Activated T-helper 1 cell treated with anti-CD3 and anti-CD28 coated beads, Interleukin-12 subunit alpha, Interleukin-12 subunit beta, Interleukin-2, Interleukin-4 antibody, amounts not matched to agents 30 ng/mL and 10 ng/mL and 1 ng/mL, durations not matched to agents 14 hours and 24 hours and 36 hours (primary cell): ENCODE measurements at regions of chr20 and their contacts with region 1.

Region 1: DNA sequence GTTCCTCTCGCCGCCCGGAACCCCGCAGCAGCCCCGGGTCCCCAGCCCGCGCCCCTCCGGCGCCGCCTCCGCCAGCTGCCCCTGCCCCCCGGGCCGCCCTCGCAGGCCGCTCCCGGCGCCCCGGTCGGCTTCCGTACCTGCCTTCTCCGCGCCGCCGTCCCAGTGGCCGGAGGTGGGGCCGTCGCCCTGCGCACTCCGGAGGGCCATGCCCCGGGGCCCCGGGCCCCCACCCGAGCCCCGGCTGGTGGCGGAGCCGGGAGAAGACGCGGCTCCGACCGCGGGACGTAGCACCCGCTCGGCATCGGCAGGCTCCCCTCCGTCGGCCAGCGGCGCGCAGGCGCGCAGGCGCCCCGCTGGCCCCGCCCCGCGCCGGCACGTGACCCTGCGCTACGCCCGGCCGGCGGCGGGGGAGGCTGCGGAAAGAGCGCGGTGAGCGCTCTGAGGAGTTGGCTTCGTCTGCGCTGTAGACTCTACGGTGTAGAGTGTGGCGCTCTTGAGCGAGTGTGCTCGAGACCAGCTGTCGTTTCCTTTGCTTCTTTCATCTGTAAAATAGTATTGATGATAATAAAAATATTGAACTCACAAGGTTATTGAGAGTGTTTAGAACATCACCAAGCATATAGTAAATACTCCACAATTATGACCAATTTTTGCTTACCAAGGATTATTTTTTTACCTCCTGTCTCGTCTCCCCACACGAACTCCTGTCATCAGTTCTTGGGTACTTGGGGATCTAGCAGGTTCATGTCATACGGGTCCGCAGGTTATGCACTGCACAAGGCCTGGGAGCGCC is at the start of gene TBC1D20:
- DNase-seq: peak; percentile 84
- H3K4me3 Mint-ChIP-seq: peak within 1 kb of the TSS; percentile 98
- H3K27ac Mint-ChIP-seq: peak within 1 kb of the TSS; percentile 94
- H3K4me1 Mint-ChIP-seq: peaks cover 44% of the 10 kb centered on the region
- H3K27me3 Mint-ChIP-seq: peaks cover 2% of the 10 kb centered on the region
- total RNA-seq, gene TBC1D20: 37.5 and 41.4 TPM in 2 replicates

Region 2: DNA sequence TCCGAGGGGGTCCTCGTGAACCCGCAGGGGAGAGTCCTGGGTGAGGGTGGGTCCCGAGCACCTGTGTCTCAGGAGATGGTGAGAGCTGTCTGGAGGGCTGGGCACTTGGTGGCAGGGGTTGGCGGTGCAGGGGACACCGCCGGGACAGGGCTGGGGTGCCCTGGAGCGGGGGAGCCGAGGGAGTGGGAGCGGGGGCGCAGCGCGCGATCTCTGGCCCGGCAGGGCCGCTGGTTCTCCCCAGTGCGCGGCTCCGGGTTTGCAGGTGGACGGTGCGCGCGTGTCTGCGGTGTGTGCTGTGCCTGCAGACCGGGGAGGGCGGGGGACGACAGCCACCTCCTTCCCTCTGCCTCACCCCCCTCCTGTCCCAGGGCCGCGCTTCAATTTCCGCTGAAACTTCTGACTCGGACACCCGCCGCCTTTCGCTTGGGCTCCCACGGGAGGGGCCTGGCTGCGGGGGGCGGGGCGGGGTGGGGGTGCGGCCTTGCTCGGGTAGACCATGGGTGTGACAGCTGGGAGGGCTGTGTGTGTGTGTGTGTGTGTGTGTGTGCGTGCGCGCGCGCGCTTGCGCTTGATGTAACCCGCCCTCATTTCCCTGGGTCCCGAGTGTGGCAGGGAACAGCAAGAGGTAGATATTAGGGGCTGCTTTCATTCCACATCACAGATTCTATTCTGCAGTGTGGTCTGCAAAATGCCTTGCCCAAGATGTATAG is 80.7 kb before region 1 on chr20:
- intact Hi-C with region 1: loop called (anchors 1 kb)
- DNase-seq: peak; percentile 75
- H3K4me3 Mint-ChIP-seq: peak overlapping the region; percentile 81
- H3K27ac Mint-ChIP-seq: peak overlapping the region; percentile 68
- H3K4me1 Mint-ChIP-seq: peaks cover 22% of the 10 kb centered on the region
- H3K27me3 Mint-ChIP-seq: peaks cover 3% of the 10 kb centered on the region

Region 3: GRCh38 chr20:407133-407952 is 55.1 kb before region 1 on chr20:
- intact Hi-C with region 1: loop called (anchors 1 kb)
- DNase-seq: peak; percentile 59
- H3K4me3 Mint-ChIP-seq: peak overlapping the region; percentile 86
- H3K27ac Mint-ChIP-seq: peak overlapping the region; percentile 95
- H3K4me1 Mint-ChIP-seq: peaks cover 47% of the 10 kb centered on the region
- H3K27me3 Mint-ChIP-seq: no peaks in the 10 kb centered on the region

Region 4: GRCh38 chr20:420641-421574 is 41.5 kb before region 1 on chr20:
- intact Hi-C with region 1: no loop called
- DNase-seq: no peak
- H3K4me3 Mint-ChIP-seq: no peak overlapping the region
- H3K27ac Mint-ChIP-seq: no peak overlapping the region
- H3K4me1 Mint-ChIP-seq: peaks cover 24% of the 10 kb centered on the region
- H3K27me3 Mint-ChIP-seq: no peaks in the 10 kb centered on the region

Region 5: DNA sequence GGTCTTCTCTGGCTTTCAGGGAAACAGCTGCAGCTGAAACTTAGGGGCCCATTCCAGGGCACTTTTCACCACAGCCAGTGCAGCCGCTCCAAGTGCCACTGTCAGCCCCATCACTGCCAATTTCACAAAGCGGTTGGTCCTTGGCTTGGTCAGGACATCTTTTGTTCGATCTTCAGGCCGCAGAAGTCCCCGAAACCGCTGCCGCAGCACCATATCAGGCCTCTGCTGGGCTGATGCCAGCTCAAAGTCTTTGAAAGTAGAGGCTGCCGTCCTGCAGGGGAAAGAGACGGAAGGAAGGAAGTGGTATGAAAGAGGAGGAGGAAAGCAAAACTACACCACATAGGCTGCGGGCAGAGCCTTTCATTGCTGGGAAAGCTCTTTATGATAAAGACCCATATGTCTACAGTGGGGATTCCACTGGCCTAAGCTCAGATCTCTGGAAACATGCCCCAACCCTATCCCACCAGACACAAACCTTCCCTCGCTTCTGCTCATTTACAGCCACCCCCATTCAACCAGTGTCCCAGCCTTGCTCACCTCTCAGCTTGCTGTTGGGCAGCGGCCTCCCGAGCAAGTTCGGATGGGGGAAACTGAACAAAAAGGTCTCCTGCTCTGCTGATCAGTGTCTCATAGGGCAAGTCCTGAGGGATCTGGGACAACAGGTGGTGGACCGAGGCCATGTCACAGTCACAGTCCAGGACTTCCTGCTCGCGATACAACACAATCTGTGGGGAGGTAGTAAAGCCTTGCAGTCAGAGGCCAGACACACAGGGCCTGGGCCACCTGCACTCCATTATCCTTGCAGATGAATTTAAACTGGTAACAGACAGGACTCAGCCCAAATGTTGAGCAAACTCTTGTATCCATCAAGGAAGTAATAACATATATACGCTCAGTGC is 23.6 kb before region 1 on chr20:
- intact Hi-C with region 1: loop called (anchors 1 kb)
- DNase-seq: peak; percentile 58
- H3K4me3 Mint-ChIP-seq: peak overlapping the region; percentile 77
- H3K27ac Mint-ChIP-seq: peak overlapping the region; percentile 85
- H3K4me1 Mint-ChIP-seq: peaks cover 79% of the 10 kb centered on the region
- H3K27me3 Mint-ChIP-seq: no peaks in the 10 kb centered on the region

Region 6: GRCh38 chr20:478949-479429 is 16.6 kb after region 1 on chr20:
- intact Hi-C with region 1: loop called (anchors 1 kb)
- DNase-seq: peak; percentile 25
- H3K4me3 Mint-ChIP-seq: no peak overlapping the region
- H3K27ac Mint-ChIP-seq: peak overlapping the region; percentile 69
- H3K4me1 Mint-ChIP-seq: peaks cover 33% of the 10 kb centered on the region
- H3K27me3 Mint-ChIP-seq: no peaks in the 10 kb centered on the region

Region 7: DNA sequence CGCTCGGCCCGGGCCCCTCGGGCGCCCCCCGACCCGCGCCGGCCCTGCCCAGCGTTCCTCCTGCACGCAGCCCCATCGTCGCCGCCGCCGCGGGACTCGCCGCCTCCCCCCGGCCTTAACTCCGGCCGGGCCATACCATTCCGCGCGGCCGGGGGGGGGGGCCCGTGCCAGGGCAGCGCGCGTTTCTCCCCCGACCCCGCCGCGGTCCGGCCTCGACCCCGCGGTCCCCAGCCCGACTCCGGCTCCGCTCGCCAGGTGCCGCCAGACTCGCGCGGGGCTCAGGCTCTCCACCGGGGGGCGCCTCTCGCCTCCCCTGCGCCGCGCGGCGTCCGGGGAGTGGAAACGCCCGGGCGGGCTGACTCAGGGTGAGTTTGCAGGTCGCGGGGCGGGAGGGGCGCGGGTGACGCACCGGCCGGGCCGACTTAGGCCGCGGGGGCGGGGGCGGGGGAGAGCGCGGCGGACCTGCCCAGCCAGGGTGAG is 190.8 kb after region 1 on chr20 and contains the start of gene SRXN1:
- intact Hi-C with region 1: loop called (anchors 10 kb)
- DNase-seq: peak; percentile 80
- H3K4me3 Mint-ChIP-seq: peak within 1 kb of the TSS; percentile 87
- H3K27ac Mint-ChIP-seq: peak within 1 kb of the TSS; percentile 81
- H3K4me1 Mint-ChIP-seq: peaks cover 35% of the 10 kb centered on the region
- H3K27me3 Mint-ChIP-seq: peaks cover 16% of the 10 kb centered on the region
- total RNA-seq, gene SRXN1: 28.8 and 30.2 TPM in 2 replicates